Heart right ventricle (tissue), 16 donors: ENCODE measurements at regions of chr2 and their contacts with region 1.

Region 1: GRCh38 chr2:64644177-64645004 is 9.3 kb downstream of the SERTAD2 start:
- DNase-seq: peak; percentile 76 to 87
- ATAC-seq: peak; percentile 91 to 95 (median 93)
- H3K4me3 ChIP-seq: peak overlapping the region; percentile 41 to 61 (median 55)
- H3K27ac ChIP-seq: peak overlapping the region; percentile 83 to 96 (median 93)
- H3K4me1 ChIP-seq: peaks cover 0 to 91% (median 71%) of the 10 kb centered on the region in 9 donors
- H3K27me3 ChIP-seq: no peaks in the 10 kb centered on the region
- CTCF ChIP-seq: no peak

Region 2: DNA sequence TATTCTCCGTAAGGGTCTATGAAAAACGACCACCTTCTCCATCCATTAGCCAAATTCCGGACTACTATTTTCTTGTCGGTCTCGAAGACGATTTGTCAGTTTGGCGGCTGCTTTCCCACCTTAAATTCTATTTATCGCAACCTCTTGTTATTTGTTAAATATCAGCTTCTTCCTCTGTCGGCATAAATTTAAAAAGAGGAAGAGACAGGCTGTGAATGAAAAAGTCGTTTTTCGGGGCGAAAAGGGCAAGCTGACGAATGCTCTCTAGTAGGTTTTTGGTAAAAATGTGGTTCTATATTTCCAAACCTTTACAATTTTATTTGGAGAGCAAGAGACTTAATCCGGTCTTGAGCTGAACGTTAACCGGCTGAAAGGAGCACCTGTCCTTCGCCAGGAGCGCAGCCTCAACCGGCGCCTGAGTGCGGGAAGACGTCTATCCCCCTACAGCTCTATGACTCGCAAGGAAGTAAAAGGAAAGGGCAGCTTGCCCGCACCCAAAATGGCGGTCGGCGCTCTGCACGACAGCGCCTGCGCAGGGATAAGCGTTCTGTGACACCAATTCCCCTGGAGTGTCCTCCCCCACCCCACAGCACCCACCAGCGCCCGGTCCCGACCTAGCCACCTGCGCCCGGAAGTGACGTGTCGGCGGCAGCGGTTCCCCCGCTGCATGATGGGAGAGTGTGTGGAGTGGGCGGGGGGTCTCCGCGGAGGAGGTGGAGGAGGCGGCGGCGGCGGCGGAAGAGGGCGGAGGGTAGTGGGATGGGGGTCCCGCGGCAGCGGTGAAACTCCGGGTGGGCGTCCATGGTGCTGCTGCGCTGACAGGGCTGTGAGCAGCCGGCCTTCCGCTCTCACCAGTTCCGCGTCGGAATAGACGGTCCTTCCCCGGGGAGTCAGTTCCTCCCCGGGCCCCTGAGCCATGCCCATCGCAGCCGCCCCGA is 120.5 kb before region 1 on chr2 and contains the start of gene AFTPH:
- intact Hi-C with region 1: loop called in 3 of 10 experiments (anchors 10 kb)
- DNase-seq: peak; percentile 99
- ATAC-seq: peak; percentile 99 to 100 (median 100)
- H3K4me3 ChIP-seq: peak within 1 kb of the TSS; percentile 74 to 98 (median 92)
- H3K27ac ChIP-seq: peak within 1 kb of the TSS; percentile 75 to 98 (median 94)
- H3K4me1 ChIP-seq: peaks cover 0 to 49% (median 34%) of the 10 kb centered on the region in 9 donors
- H3K27me3 ChIP-seq: no peaks in the 10 kb centered on the region
- CTCF ChIP-seq: peak in 1 of 9 donors; percentile 13
- total RNA-seq, gene AFTPH: 9.8 to 12.8 (median 11.0) TPM

Region 3: GRCh38 chr2:64535024-64535423 is 109.4 kb before region 1 on chr2:
- intact Hi-C with region 1: no loop called
- DNase-seq: no peak
- ATAC-seq: no peak
- H3K4me3 ChIP-seq: no peak overlapping the region
- H3K27ac ChIP-seq: no peak overlapping the region
- H3K4me1 ChIP-seq: peaks cover 0 to 52% (median 15%) of the 10 kb centered on the region in 9 donors
- H3K27me3 ChIP-seq: no peaks in the 10 kb centered on the region
- CTCF ChIP-seq: no peak

Region 4: DNA sequence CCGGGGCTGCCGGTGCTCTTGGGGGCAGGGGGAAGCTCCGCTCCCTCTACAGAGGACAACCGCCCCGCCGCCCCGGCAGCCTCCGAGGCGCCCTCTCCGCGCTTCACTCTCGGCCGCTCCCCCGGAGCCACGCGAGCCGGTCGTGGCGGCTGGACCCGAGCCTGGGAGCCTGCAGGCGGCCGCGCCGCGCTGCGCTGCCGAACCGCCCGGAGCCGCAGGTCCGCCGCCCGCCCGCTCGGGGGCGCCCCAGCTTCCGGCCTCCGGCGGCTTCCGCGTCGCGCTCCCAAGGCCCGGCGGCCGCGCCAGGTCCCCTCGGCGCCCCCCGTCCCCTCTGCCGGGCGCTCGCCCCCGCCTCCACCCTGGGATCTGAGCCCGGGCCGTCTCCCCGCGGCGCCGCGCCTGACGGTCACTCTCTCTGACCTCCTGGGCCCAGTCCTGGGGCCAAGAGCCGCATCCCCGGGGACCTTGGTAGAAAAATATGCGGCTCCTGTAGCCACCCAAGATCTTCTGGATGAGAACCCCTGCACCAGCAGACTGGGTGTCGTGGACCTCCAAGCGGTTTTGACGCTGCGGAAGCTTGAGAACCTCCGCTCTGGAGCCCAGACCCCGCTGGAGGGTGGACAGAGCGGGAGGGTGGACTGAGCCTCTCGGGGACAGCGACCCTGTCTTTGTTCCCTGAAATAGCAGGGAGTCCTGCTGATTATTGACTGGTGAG is 35.0 kb before region 1 on chr2:
- intact Hi-C with region 1: loop called in 5 of 10 experiments (anchors 2 to 5 kb)
- DNase-seq: peak; percentile 44 to 77
- ATAC-seq: peak; percentile 46 to 85 (median 72)
- H3K4me3 ChIP-seq: peak overlapping the region; percentile 47 to 79 (median 66)
- H3K27ac ChIP-seq: peak overlapping the region in 9 of 10 donors; percentile 66 to 92 (median 83)
- H3K4me1 ChIP-seq: peaks cover 0 to 34% (median 15%) of the 10 kb centered on the region in 9 donors
- H3K27me3 ChIP-seq: no peaks in the 10 kb centered on the region
- CTCF ChIP-seq: peak in 6 of 9 donors; percentile 18 to 72 (median 52)

Region 5: GRCh38 chr2:64685438-64685837 is 41.0 kb after region 1 on chr2:
- intact Hi-C with region 1: no loop called
- DNase-seq: no peak
- ATAC-seq: no peak
- H3K4me3 ChIP-seq: no peak overlapping the region
- H3K27ac ChIP-seq: no peak overlapping the region
- H3K4me1 ChIP-seq: no peaks in the 10 kb centered on the region
- H3K27me3 ChIP-seq: no peaks in the 10 kb centered on the region
- CTCF ChIP-seq: no peak

Region 6: GRCh38 chr2:64767670-64768468 is 123.5 kb after region 1 on chr2:
- intact Hi-C with region 1: loop called in 3 of 10 experiments (anchors 5 kb)
- DNase-seq: peak; percentile 89 to 94
- ATAC-seq: peak; percentile 95 to 99 (median 96)
- H3K4me3 ChIP-seq: peak overlapping the region; percentile 26 to 75 (median 70)
- H3K27ac ChIP-seq: peak overlapping the region; percentile 95 to 99 (median 98)
- H3K4me1 ChIP-seq: peaks cover 0 to 36% (median 17%) of the 10 kb centered on the region in 9 donors
- H3K27me3 ChIP-seq: no peaks in the 10 kb centered on the region
- CTCF ChIP-seq: peak in 2 of 9 donors; percentile 10 to 35

Region 7: DNA sequence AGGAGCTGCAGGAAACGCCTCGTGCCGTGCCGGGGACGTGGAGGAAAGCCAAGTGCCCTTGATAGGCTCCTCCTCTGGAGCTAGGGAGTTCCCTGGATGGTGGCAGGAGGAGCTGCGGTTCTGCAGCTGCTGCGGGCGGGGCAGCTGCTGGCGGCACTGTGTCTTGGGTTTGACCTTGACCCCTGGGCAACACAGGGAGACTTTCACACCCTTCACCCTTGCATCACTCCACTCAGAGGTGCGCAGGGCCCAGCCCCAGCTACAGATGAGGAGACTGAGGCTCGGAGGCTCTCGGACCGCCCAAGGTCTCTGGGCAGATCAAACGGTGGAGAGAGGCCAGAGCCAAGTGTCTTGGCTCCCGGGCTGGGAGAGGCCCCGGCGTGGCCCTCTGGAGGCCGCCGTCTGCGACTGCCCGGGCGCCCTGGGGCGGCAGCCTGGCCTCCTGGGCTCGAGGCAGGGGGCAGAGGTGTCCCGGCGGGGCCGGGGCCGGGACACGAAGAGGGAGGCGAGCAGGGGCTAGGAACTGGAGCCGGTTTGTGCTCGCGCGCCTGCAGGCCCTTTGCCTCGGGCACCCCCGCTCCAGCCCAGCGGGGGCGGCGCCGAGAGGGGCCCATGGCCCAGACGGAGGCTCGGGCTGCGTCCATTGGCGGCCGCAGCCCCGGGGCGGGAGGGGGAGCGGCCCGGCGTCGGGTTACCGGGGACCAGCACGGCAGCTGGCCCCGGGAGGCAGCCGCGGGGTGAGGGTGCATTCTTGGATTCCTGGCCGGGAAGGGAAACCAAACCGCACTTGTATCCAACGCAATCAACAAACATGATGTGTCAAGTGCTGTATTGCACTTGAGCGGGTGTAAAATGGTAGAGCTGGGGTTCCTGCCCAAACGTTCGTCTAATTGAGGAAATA is 215.2 kb after region 1 on chr2:
- intact Hi-C with region 1: loop called in 7 of 10 experiments (anchors 2 to 5 kb)
- DNase-seq: peak; percentile 89 to 90
- ATAC-seq: peak; percentile 82 to 91 (median 84)
- H3K4me3 ChIP-seq: peak overlapping the region; percentile 22 to 62 (median 53)
- H3K27ac ChIP-seq: peak overlapping the region; percentile 84 to 99 (median 94)
- H3K4me1 ChIP-seq: peaks cover 23 to 91% (median 37%) of the 10 kb centered on the region in 9 donors
- H3K27me3 ChIP-seq: no peaks in the 10 kb centered on the region
- CTCF ChIP-seq: peak in 1 of 9 donors; percentile 11